ENCODE measurements at regions of chr1 and their contacts with region 1.

Region 1: GRCh38 chr1:23539698-23540266 is 8.7 kb upstream of the E2F2 start:
- DNase-seq: peak; percentile 93
- H3K4me3 ChIP-seq: no peak overlapping the region
- H3K27ac ChIP-seq: no peak overlapping the region
- H3K4me1 ChIP-seq: peaks cover 8% of the 10 kb centered on the region
- H3K27me3 ChIP-seq: no peaks in the 10 kb centered on the region
- CTCF ChIP-seq: peak; percentile 93
- POLR2A ChIP-seq: no peak

Region 2: GRCh38 chr1:23344111-23344986 is 195.4 kb before region 1 on chr1 and contains the start of gene HNRNPR:
- CTCF ChIA-PET with region 1: interaction called, 8 read pairs
- POLR2A ChIA-PET with region 1: no interaction called
- dilution Hi-C with region 1: no loop called
- intact Hi-C with region 1: loop called (anchors 10 kb)
- DNase-seq: peak; percentile 100
- H3K4me3 ChIP-seq: peak within 1 kb of the TSS; percentile 73 to 99 (median 99)
- H3K27ac ChIP-seq: peak within 1 kb of the TSS; percentile 79
- H3K4me1 ChIP-seq: peaks cover 27% of the 10 kb centered on the region
- H3K27me3 ChIP-seq: no peaks in the 10 kb centered on the region
- CTCF ChIP-seq: no peak
- POLR2A ChIP-seq: peak; percentile 87
- total RNA-seq, gene HNRNPR: 165 and 171 TPM in 2 replicates

Region 3: DNA sequence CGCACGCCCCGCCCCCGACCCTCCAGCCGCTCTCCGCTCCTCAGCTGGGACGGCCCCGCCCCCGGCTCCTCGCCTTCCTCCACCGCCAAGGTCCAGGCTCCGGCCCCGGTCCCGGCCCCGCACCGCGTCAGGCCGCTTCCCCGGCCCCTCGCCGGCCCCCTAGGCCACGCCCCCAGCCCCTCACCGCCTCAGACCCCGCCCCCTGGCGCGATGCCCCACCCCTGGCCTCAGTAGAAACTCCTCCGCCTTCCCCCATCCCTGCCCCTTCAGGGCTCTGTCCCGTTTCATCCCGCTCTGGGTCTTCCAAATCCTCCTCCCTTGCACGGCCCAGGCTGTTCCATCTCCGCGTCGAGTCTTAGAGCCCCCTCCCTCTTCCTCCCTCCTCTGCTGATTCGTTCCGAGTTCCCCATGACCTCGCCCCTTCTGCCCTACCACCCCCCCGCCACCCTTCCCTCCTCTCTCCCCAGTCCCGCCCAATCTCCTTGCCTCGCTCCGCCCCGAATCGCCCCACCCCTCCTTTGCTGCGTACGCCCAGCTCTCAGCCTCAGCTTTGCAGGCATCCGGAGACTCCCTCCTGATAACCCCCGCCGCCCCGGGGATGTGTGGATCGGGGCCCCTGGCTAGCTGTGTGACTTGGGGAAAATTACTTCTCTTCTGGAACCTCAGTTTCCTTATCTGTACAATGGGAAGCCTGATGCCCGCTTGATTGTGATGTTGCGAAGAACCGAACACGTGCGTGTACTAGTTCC is 55.4 kb before region 1 on chr1:
- CTCF ChIA-PET with region 1: interaction called, 20 read pairs
- POLR2A ChIA-PET with region 1: no interaction called
- dilution Hi-C with region 1: no loop called
- intact Hi-C with region 1: loop called (anchors 5 kb)
- DNase-seq: peak; percentile 92
- H3K4me3 ChIP-seq: peak overlapping the region; percentile 8 to 67 (median 34)
- H3K27ac ChIP-seq: no peak overlapping the region
- H3K4me1 ChIP-seq: peaks cover 11% of the 10 kb centered on the region
- H3K27me3 ChIP-seq: peaks cover 0 to 1% of the 10 kb centered on the region in 2 experiments
- CTCF ChIP-seq: no peak
- POLR2A ChIP-seq: no peak

Region 4: DNA sequence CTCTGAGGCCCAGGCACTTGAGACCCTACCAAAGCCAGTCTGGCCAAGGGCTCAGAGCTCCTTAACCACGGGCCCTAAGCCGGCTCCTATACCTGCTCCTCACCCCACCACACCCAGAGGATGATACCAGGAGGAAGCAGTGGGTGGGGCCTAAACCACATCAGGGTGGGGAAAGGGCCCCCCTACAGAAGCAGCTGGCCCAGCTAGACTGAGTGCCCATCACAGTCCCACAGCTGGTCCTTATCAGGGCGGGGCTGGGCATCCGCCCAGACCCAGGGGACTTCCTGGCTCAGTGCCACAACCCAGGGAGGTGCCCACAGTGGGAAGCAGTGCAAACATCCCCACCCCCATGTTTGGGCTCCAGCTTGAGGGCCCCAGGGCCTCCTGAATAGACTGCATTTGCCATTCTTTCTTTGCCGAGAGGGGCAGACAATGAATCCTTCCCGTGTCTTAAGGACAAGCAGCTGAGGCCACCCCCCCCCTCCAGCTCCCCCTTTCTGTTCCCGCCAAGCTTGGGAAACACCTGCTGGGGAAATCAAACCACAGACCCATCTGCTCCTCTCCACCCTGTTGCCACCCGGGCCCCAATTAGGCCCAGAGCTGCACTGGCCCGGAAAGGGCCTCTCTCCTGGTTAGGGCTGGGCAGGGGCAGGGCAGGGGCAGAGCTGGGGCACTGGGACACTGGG is 14.9 kb before region 1 on chr1:
- CTCF ChIA-PET with region 1: interaction called, 19 read pairs
- POLR2A ChIA-PET with region 1: no interaction called
- dilution Hi-C with region 1: no loop called
- intact Hi-C with region 1: loop called (anchors 1 kb)
- DNase-seq: no peak
- H3K4me3 ChIP-seq: no peak overlapping the region
- H3K27ac ChIP-seq: no peak overlapping the region
- H3K4me1 ChIP-seq: peaks cover 21% of the 10 kb centered on the region
- H3K27me3 ChIP-seq: no peaks in the 10 kb centered on the region
- CTCF ChIP-seq: no peak
- POLR2A ChIP-seq: no peak

Region 5: DNA sequence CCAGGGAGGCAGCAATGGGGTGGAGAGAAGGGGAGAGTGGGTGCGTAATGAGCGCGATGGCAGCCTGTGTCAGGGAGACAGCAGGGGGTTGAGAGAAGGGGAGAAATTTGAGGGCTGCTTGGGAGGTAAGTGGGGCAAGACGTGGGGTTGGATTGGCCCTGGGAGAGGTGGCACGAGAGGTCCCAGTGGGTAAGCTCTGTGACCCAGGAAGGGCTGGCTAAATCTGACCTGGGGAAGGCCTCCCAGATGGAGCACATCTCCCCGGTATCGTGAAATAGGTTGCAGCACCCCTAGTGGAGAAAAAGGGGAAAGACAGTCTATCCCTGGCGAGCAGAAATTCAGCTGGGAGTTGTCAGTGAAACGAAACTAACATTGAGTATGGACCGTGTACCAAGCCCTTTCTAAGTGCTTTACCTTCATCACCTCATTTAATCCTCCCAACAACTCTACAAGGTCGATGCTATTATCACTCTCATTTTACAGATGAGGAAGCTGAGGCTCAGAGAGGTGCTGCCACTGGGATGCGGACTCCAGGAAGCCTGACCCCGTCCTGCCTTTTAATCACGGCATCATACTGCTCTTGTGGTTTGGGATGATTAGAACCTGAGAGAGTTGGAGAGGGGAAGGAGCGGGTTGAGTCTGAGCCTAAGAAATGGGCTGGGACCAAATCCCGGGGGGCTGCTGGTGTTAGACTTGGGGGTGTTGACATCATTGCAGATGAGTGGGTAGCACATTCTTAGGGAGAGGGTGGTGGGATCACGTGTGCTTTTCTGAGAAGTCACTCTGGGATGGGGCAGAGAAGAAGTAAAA is 95.3 kb after region 1 on chr1:
- CTCF ChIA-PET with region 1: interaction called, 1,069 read pairs
- POLR2A ChIA-PET with region 1: interaction called, 4 read pairs
- dilution Hi-C with region 1: no loop called
- intact Hi-C with region 1: loop called (anchors 1 kb)
- DNase-seq: peak; percentile 83
- H3K4me3 ChIP-seq: peak overlapping the region; percentile 24 to 78 (median 41)
- H3K27ac ChIP-seq: peak overlapping the region; percentile 67
- H3K4me1 ChIP-seq: no peaks in the 10 kb centered on the region
- H3K27me3 ChIP-seq: peaks cover 0 to 4% of the 10 kb centered on the region in 2 experiments
- CTCF ChIP-seq: peak; percentile 85 to 93
- POLR2A ChIP-seq: no peak

Region 6: GRCh38 chr1:23664837-23665795 is 125.3 kb after region 1 on chr1:
- CTCF ChIA-PET with region 1: interaction called, 5 read pairs
- POLR2A ChIA-PET with region 1: no interaction called
- dilution Hi-C with region 1: no loop called
- intact Hi-C with region 1: loop called (anchors 1 kb)
- DNase-seq: peak; percentile 39
- H3K4me3 ChIP-seq: no peak overlapping the region
- H3K27ac ChIP-seq: no peak overlapping the region
- H3K4me1 ChIP-seq: no peaks in the 10 kb centered on the region
- H3K27me3 ChIP-seq: no peaks in the 10 kb centered on the region
- CTCF ChIP-seq: peak; percentile 23 to 30
- POLR2A ChIP-seq: no peak

Region 7: GRCh38 chr1:23790696-23791515 is 251.1 kb after region 1 on chr1 and contains the start of gene LYPLA2:
- CTCF ChIA-PET with region 1: no interaction called
- POLR2A ChIA-PET with region 1: no interaction called
- dilution Hi-C with region 1: no loop called
- intact Hi-C with region 1: no loop called
- DNase-seq: peak; percentile 86
- H3K4me3 ChIP-seq: peak within 1 kb of the TSS; percentile 77 to 99 (median 95)
- H3K27ac ChIP-seq: peak within 1 kb of the TSS; percentile 92
- H3K4me1 ChIP-seq: peaks cover 22% of the 10 kb centered on the region
- H3K27me3 ChIP-seq: no peaks in the 10 kb centered on the region
- CTCF ChIP-seq: peak in 1 of 2 donors; percentile 8
- POLR2A ChIP-seq: peak; percentile 68
- total RNA-seq, gene LYPLA2: 110 TPM in 2 replicates

Measured in endothelial cell of umbilical vein (primary cell).